CD4-positive, alpha-beta T cell (primary cell): ENCODE measurements at regions of chr19 and their contacts with region 1.

Region 1: DNA sequence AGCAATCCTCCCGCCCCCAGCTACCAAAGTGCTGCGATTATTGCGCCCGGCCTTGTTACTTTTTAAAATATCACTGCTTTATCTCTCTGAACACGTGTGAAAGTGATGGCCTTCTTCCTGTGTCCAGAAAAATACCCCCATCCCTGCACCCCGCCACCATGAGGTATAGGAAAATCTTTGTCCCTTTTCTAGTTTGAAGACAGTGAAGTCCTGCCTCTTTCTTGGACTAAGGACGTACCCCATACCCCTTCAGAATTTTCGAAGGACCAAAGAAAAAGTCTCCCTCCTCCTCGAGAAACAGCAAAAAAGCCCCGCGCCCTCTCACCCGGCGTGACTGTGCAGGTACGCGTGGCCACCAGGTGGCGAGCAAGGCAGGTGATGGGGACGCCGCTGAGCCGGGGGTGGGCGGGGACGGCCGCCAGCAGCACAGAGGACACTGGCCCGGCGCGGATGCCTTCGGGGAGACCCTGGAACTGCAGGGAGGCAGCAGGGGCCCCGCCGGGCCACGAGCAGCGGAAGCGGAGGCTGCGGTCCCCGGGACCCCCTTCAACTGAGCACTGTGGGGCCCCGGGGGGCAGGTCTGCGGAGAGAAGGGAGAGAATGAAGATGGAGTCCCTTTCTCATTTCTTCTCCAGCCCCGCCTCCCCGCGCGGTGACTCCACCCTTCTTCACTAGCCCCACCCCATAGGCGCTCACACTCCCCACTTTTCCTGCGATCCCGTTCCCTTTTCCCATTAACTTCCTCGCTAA is 3.2 kb downstream of the VSIG10L start:
- DNase-seq: peak; percentile 73 to 92 (median 81)
- ATAC-seq: peak; percentile 84
- H3K4me3 ChIP-seq: peak overlapping the region; percentile 62
- H3K4me3 Mint-ChIP-seq: peak overlapping the region; percentile 80
- H3K27ac ChIP-seq: no peak overlapping the region
- H3K27ac Mint-ChIP-seq: peak overlapping the region; percentile 7
- H3K4me1 ChIP-seq: peaks cover 23% of the 10 kb centered on the region
- H3K4me1 Mint-ChIP-seq: peaks cover 23% of the 10 kb centered on the region
- H3K27me3 ChIP-seq: no peaks in the 10 kb centered on the region
- H3K27me3 Mint-ChIP-seq: no peaks in the 10 kb centered on the region
- CTCF ChIP-seq: peak; percentile 91

Region 2: DNA sequence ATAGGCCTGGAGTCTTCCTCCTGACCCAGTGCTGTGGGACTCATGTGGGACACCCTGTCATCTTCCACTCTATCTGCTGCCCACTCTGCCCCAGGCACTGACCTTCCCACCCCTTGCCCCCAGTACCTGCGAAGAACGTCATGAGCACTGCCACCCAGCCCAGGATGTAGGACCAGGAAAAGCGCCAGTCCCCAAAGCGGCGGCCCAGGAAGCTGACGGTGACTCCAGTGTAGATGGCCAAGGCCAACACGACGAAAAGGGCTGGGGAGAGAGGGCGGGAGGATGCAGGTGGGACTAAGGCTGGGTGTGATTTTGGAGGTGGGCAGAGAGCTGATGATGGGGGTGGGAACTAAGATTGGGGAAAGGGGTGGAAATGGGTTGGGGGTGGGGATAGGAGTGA is 41.6 kb after region 1 on chr19:
- CTCF ChIA-PET with region 1: no interaction called
- POLR2A ChIA-PET with region 1: no interaction called
- intact Hi-C with region 1: no loop called
- DNase-seq: no peak
- ATAC-seq: no peak
- H3K4me3 ChIP-seq: no peak overlapping the region
- H3K4me3 Mint-ChIP-seq: no peak overlapping the region
- H3K27ac ChIP-seq: no peak overlapping the region
- H3K27ac Mint-ChIP-seq: no peak overlapping the region
- H3K4me1 ChIP-seq: peaks cover 16% of the 10 kb centered on the region
- H3K4me1 Mint-ChIP-seq: peaks cover 13% of the 10 kb centered on the region
- H3K27me3 ChIP-seq: no peaks in the 10 kb centered on the region
- H3K27me3 Mint-ChIP-seq: no peaks in the 10 kb centered on the region
- CTCF ChIP-seq: no peak

Region 3: GRCh38 chr19:51393959-51394836 is 55.5 kb after region 1 on chr19:
- CTCF ChIA-PET with region 1: interaction called, 3 read pairs
- POLR2A ChIA-PET with region 1: interaction called, 3 read pairs
- intact Hi-C with region 1: loop called (anchors 1 to 2 kb)
- DNase-seq: peak; percentile 69 to 96 (median 76)
- ATAC-seq: peak; percentile 95
- H3K4me3 ChIP-seq: peak overlapping the region; percentile 52
- H3K4me3 Mint-ChIP-seq: peak overlapping the region; percentile 90
- H3K27ac ChIP-seq: peak overlapping the region; percentile 21 to 31
- H3K27ac Mint-ChIP-seq: peak overlapping the region; percentile 58
- H3K4me1 ChIP-seq: peaks cover 26% of the 10 kb centered on the region
- H3K4me1 Mint-ChIP-seq: peaks cover 23% of the 10 kb centered on the region
- H3K27me3 ChIP-seq: no peaks in the 10 kb centered on the region
- H3K27me3 Mint-ChIP-seq: no peaks in the 10 kb centered on the region
- CTCF ChIP-seq: no peak

Region 4: DNA sequence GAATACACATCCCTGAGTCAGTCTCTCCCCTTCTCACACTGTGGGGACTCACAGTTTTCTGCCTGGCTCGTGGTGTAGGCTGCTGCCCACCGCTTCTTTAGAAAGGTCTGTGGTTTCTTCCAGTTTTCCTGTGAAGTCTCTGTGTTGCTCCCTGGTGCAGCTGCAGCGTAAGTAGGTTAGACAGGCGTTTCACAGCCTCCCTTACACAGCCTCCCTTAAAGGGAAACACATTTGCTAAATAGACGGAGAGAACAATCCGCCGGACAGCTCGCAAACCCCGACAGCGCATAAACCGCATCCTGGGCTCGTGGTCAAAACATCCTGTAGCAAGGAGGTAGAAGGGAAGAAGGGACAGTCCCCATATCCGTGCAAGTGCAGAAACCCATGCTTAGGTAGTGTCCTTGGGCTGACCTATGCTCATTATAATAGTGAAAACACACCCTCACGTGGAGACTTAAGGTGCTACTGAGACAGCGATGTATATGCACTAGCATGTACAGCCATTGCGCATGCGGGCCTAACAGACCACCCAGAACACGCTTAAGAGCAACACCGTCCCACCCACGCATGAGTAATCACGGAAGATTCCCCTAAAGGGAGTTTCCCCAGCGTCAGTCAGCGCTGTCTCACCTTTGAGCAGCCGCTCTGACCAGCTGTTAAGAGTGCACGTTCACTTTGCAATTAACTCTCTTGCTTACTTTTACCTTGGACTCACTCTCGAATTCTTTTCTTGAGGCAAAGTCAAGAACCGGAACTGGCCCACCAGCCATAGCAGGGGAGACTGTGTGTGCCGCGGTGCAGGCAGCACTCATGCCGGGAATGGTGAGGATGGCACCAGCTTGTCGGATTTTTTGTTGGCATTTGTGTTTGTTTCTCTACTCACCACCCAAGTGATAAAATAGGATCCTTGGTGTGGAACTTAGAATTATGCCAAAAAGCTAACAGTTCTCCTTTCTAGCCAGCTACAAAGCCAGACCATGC is 103.0 kb after region 1 on chr19:
- CTCF ChIA-PET with region 1: no interaction called
- POLR2A ChIA-PET with region 1: interaction called, 3 read pairs
- intact Hi-C with region 1: loop called (anchors 1 to 2 kb)
- DNase-seq: peak; percentile 50 to 92 (median 70)
- ATAC-seq: peak; percentile 90
- H3K4me3 ChIP-seq: peak overlapping the region; percentile 44
- H3K4me3 Mint-ChIP-seq: peak overlapping the region; percentile 78
- H3K27ac ChIP-seq: peak overlapping the region; percentile 49 to 68
- H3K27ac Mint-ChIP-seq: peak overlapping the region; percentile 45
- H3K4me1 ChIP-seq: peaks cover 29% of the 10 kb centered on the region
- H3K4me1 Mint-ChIP-seq: peaks cover 38% of the 10 kb centered on the region
- H3K27me3 ChIP-seq: peaks cover 0 to 2% of the 10 kb centered on the region in 2 experiments
- H3K27me3 Mint-ChIP-seq: peaks cover 4% of the 10 kb centered on the region
- CTCF ChIP-seq: no peak

Region 5: GRCh38 chr19:51644636-51645271 is 306.0 kb after region 1 on chr19:
- CTCF ChIA-PET with region 1: no interaction called
- POLR2A ChIA-PET with region 1: no interaction called
- intact Hi-C with region 1: no loop called
- DNase-seq: no peak
- ATAC-seq: no peak
- H3K4me3 ChIP-seq: peak overlapping the region; percentile 14
- H3K4me3 Mint-ChIP-seq: no peak overlapping the region
- H3K27ac ChIP-seq: no peak overlapping the region
- H3K27ac Mint-ChIP-seq: no peak overlapping the region
- H3K4me1 ChIP-seq: no peaks in the 10 kb centered on the region
- H3K4me1 Mint-ChIP-seq: no peaks in the 10 kb centered on the region
- H3K27me3 ChIP-seq: peaks cover 10 to 12% of the 10 kb centered on the region in 2 experiments
- H3K27me3 Mint-ChIP-seq: peaks cover 60% of the 10 kb centered on the region
- CTCF ChIP-seq: no peak

Region 6: DNA sequence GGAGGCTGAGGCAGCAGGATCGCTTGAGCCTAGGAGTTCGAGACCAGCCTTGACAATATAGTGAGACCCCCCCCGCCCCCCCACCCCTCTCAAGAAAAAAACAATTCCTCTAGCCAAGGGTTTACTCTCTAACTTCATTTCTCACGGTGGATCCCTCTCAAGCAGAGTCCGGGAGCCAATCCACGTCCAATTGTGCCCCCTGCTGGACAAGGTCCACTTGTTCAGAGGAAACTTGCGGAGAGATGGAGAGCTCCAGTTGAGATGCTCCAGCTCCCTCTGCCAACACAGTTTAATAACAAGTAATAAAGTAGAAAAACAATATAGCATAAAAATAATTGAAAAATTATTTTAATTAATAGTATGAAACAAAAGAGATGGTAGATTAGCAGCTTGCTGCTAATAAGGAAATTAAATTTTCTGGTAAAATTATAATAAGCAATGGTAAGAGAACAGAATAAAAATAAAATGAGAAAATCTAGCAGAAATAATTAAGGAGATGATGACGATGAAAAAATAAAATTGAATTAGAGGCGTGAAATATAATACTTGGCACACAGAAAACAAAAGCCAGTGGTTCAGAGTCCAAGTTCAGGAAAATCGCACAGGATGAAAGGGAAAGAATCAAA is 322.4 kb after region 1 on chr19:
- CTCF ChIA-PET with region 1: no interaction called
- POLR2A ChIA-PET with region 1: interaction called, 3 read pairs
- intact Hi-C with region 1: loop called (anchors 1 kb)
- DNase-seq: peak in 11 of 14 experiments; percentile 17 to 75 (median 29)
- ATAC-seq: no peak
- H3K4me3 ChIP-seq: no peak overlapping the region
- H3K4me3 Mint-ChIP-seq: no peak overlapping the region
- H3K27ac ChIP-seq: no peak overlapping the region
- H3K27ac Mint-ChIP-seq: no peak overlapping the region
- H3K4me1 ChIP-seq: peaks cover 3% of the 10 kb centered on the region
- H3K4me1 Mint-ChIP-seq: peaks cover 4% of the 10 kb centered on the region
- H3K27me3 ChIP-seq: peaks cover 0 to 15% of the 10 kb centered on the region in 2 experiments
- H3K27me3 Mint-ChIP-seq: peaks cover 46% of the 10 kb centered on the region
- CTCF ChIP-seq: no peak